Ovary (tissue), 10 donors: ENCODE measurements at regions of chr14 and their contacts with region 1.

Region 1: DNA sequence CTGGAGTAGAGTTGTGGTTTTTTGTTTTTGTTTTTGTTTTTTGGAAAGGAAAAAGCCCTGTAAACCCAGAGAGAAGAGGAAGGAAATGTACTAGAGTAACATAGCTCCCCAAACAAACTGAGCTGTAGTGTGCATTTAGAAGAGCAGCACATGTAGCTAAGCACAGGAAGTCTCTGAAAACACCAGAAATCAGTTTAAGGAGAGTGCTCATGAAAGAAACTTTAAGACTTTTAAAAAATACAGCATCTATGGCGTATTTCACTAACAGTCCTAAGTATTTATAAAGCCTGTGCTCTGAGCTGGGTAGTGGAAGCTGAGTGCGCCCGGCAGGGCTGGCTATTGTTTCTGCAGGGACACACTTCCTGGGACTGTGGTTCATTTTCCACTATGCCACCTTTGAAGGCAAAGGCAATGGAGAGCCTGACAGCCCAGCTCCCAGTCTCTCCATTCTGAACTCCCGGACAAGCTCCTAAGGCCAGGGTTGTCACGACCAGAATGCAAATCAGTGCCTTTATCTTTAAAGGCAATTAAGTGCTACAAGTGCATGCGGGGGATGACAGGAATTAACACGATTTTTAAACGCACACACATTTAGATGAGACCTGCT is 45.4 kb downstream of the NIN start:
- DNase-seq: no peak
- H3K4me3 ChIP-seq: no peak overlapping the region
- H3K27ac ChIP-seq: no peak overlapping the region
- H3K4me1 ChIP-seq: peaks cover 6% of the 10 kb centered on the region
- H3K27me3 ChIP-seq: no peaks in the 10 kb centered on the region
- CTCF ChIP-seq: no peak
- EP300 ChIP-seq: no peak
- POLR2A ChIP-seq: no peak

Region 2: GRCh38 chr14:50542941-50543418 is 242.6 kb before region 1 on chr14:
- intact Hi-C with region 1: loop called in 1 of 4 experiments (anchors 5 kb)
- DNase-seq: no peak
- H3K4me3 ChIP-seq: no peak overlapping the region
- H3K27ac ChIP-seq: no peak overlapping the region
- H3K4me1 ChIP-seq: no peaks in the 10 kb centered on the region
- H3K27me3 ChIP-seq: no peaks in the 10 kb centered on the region
- CTCF ChIP-seq: peak in 1 of 3 donors; percentile 16
- EP300 ChIP-seq: no peak
- POLR2A ChIP-seq: no peak

Region 3: DNA sequence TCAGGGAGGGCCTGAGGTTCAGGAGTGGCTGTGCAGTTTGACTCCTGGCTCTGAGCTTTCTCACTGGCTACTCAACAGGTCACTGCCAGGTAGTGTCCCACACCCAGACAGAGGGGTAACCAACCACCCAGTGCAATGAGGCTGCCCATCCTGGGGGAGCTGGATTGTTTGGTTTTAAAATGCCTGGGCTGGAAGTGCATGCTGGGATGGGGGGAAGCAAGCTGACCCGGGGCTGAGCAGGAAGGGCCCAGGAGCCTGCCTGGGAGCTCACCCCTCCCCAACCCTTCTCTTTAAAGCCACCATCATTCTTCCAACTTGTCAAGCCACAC is 73.7 kb after region 1 on chr14:
- intact Hi-C with region 1: loop called in 1 of 4 experiments (anchors 10 kb)
- DNase-seq: no peak
- H3K4me3 ChIP-seq: peak overlapping the region; percentile 51
- H3K27ac ChIP-seq: peak overlapping the region in 1 of 2 donors; percentile 65
- H3K4me1 ChIP-seq: peaks cover 2% of the 10 kb centered on the region
- H3K27me3 ChIP-seq: no peaks in the 10 kb centered on the region
- CTCF ChIP-seq: no peak
- EP300 ChIP-seq: no peak
- POLR2A ChIP-seq: no peak

Region 4: DNA sequence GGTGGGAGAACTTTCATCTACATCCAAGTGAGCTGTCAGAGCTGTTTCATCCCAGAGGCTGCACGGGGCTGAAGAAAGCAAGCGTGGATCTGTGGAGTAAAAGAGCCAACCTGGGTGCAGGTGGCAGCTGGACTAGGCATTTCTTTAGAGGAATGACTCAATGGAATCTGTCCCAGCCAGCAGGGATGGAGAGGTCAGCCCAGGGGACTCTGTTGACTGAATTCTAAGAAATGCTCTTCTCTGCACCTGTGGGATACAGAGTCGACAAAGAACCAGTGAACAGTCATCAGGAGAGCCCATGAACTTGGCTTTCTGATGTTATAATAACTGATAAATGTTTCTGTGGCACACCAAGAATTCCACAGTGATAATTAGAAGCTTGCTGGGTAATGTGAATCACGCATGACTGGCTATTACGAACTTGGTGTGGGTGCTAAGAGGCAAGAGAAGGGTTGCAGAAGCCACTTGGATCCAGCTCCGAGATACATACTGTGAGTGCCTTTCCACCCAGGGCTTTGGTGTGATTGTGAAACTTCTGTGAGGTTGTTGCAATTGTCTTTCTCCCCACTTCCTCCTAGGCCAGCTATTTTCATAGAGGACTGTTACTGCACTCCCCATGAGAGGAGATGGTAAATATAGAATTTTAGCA is 142.6 kb after region 1 on chr14:
- intact Hi-C with region 1: no loop called
- DNase-seq: no peak
- H3K4me3 ChIP-seq: no peak overlapping the region
- H3K27ac ChIP-seq: no peak overlapping the region
- H3K4me1 ChIP-seq: no peaks in the 10 kb centered on the region
- H3K27me3 ChIP-seq: no peaks in the 10 kb centered on the region
- CTCF ChIP-seq: no peak
- EP300 ChIP-seq: no peak
- POLR2A ChIP-seq: no peak